ENCODE measurements at regions of chr2 and their contacts with region 1.

Region 1: GRCh38 chr2:240136013-240136670 is at the start of gene COPS9:
- DNase-seq: peak; percentile 72 to 98 (median 88)

Region 2: GRCh38 chr2:240021488-240022104 is 114.5 kb before region 1 on chr2:
- intact Hi-C with region 1: loop called (anchors 5 kb)
- DNase-seq: peak; percentile 36 to 95 (median 74)

Measured in posterior cingulate gyrus (tissue), 11 donors.